Heart right ventricle (tissue), 16 donors: ENCODE measurements at regions of chr12 and their contacts with region 1.

Region 1: DNA sequence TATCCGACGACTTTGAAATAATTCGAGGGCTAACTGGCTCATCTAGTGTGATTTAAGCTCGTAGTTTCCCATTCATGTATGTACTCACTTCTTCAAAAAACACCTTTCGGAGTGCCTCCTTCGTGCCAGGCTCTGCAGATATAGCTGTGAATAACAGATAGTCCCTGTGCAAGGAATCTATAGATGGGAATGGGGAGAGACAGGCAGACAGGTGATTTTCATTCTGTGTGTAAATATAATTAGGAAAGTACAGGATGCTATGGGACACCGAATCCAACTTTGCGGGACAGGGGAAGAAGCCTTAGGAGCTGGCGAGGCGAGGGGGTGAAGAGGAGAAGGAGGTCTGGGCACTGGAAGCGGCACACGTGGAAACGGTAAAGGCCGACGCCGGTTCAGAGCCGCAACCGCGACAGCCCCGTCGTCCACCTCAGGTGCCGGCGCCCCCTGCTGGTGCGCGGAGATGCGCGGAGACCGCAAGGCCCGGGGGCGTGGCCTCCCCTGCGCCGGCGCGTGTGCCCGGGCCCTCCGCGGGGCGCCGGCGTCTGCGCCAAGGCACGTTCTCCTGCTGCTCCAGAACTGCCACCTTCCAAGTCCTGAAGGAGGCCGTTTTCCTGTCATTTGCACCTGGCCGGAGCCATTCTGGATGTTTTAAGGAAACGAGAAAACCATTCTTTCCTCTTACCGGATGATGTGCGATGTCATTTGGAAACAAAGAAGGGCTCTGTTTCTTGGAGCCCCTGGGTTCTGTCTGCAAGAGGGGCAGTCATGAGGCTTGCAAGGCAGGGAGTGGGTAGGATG is 18.0 kb upstream of the CACNA1C start:
- DNase-seq: peak; percentile 86 to 92
- ATAC-seq: peak; percentile 85 to 93 (median 88)
- H3K4me3 ChIP-seq: peak overlapping the region in 9 of 10 donors; percentile 19 to 53 (median 39)
- H3K27ac ChIP-seq: peak overlapping the region in 3 of 10 donors; percentile 27 to 37 (median 32)
- H3K4me1 ChIP-seq: peaks cover 7 to 86% (median 58%) of the 10 kb centered on the region in 9 donors
- H3K27me3 ChIP-seq: peaks cover 0 to 48% (median 0%) of the 10 kb centered on the region in 7 donors
- CTCF ChIP-seq: peak; percentile 87 to 98 (median 95)

Region 2: DNA sequence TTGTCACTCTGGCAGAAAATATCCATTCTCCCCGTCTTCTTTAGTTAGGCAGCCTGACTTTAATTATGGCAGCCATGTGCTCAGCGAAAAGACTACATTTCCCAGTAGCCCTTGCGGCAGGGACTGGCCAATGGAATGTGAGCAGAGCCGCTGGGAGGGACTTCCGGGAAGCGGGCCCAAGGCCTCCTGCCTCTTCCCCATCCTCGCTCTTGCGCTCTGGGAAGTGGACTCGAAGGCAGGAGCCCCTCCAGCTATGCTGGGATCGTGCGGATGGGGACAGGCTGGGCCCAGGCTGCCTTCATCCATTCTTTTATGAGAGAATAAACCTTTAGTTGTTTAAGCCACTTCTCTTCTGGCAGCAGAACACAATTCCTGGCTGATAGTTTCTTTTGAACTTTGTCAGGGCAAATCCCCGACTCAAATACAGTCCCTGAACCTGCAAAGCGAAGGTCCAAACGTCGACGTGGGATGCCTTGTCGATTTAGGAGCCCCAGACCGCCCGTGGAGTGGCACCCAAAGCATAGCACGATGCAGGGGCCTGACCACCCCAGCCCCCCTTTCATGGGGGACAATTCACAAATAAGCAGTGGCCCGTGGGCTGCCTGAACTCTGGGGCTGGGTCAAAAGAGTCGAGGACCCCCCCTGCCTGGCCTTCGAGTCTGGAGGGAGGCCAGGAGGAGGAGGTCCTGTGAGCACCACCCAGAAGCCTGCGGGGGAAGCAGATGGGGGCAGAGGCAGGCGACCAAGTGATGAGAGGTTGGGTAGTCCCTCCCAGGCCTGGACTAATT is 230.1 kb before region 1 on chr12:
- intact Hi-C with region 1: loop called in 7 of 10 experiments (anchors 5 to 10 kb)
- DNase-seq: peak; percentile 86 to 93
- ATAC-seq: peak; percentile 51 to 92 (median 86)
- H3K4me3 ChIP-seq: no peak overlapping the region
- H3K27ac ChIP-seq: peak overlapping the region in 6 of 10 donors; percentile 19 to 77 (median 42)
- H3K4me1 ChIP-seq: peaks cover 3 to 34% (median 14%) of the 10 kb centered on the region in 9 donors
- H3K27me3 ChIP-seq: no peaks in the 10 kb centered on the region
- CTCF ChIP-seq: no peak

Region 3: DNA sequence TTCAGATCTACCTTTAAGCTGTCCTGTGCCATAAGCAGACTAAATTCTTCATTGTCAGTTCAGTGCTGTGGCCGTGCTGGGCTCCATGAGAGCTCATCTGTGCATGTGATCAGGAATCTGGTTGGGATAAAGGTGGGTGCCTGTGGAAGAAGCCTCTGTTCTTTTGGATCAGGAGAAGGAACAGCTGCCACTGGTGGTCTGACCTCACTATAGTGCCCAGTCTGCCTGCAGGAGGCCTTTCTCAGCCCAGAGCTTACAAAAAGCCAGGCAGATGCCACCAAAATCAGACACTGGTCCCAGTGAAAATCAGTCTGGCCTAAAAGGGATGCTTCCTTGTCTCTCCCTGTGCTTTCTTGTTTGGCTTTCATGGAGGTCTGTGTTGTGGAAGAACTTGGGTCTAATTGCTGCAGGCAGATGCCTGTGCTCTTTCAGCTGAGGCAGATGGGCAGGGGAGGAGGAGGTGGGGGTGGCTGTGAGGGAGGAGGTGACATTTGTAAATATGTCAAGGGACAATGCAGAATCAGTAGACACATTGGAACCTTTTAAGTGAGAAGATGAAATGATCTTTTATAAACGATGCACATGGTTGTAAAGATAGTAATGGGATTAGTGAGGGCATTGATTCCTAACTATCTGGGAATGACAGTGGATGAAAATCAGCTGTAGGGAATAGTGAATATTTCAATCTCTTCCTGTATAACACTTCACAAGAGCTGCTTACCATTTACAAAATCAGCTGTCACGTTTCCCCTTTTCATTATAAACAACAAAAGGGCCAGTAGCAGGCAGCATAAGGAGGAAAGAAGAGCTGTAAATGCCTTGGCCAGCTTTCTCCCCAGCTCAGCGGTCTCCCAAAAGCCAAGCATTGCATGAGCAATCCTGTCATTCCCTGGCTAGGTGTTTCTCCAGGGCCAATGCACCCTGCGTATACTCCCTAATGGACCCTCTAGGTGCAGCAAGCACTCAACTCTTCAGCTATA is 161.0 kb before region 1 on chr12:
- intact Hi-C with region 1: no loop called
- DNase-seq: no peak
- ATAC-seq: no peak
- H3K4me3 ChIP-seq: no peak overlapping the region
- H3K27ac ChIP-seq: no peak overlapping the region
- H3K4me1 ChIP-seq: no peaks in the 10 kb centered on the region
- H3K27me3 ChIP-seq: peaks cover 0 to 26% (median 9%) of the 10 kb centered on the region in 7 donors
- CTCF ChIP-seq: no peak

Region 4: DNA sequence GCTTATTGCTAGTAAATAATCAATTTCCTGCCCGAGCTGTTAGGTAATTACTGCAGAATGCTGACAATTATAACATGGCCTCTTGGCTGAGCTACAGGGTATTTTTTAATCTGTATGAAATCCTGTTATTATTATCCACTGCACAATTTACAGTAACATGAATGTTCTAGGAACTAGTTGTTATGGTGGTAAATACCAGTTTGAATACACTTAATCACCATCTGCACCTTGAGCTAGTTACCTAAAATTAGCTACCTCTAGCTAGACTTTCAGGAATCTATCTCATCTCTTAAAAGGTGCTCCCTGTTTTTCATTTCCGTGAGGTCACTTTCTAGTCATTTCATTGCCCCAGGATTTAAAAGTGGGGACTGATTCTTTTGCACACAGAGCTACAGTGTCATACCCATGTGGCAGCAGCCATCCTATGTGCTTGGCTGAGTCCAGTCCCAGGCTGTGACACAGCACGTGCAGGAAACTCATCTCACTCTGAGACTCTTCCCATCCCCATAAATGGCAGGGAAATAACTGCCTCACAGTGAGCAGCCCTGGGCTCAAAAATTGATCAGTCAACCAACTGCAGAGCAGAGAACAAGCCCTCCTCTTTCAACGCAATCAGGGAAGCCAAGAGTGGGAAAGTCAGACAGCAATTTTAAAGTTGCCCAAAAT is 68.1 kb before region 1 on chr12:
- intact Hi-C with region 1: loop called in 4 of 10 experiments (anchors 2 to 10 kb)
- DNase-seq: peak in 1 of 2 donors; percentile 23
- ATAC-seq: peak; percentile 36 to 88 (median 84)
- H3K4me3 ChIP-seq: no peak overlapping the region
- H3K27ac ChIP-seq: peak overlapping the region in 6 of 10 donors; percentile 9 to 54 (median 42)
- H3K4me1 ChIP-seq: peaks cover 0 to 31% (median 6%) of the 10 kb centered on the region in 9 donors
- H3K27me3 ChIP-seq: no peaks in the 10 kb centered on the region
- CTCF ChIP-seq: no peak

Region 5: GRCh38 chr12:1972856-1973317 is 61.9 kb before region 1 on chr12:
- intact Hi-C with region 1: loop called in 5 of 10 experiments (anchors 2 to 10 kb)
- DNase-seq: peak; percentile 24 to 44
- ATAC-seq: peak; percentile 61 to 83 (median 74)
- H3K4me3 ChIP-seq: peak overlapping the region in 9 of 10 donors; percentile 27 to 58 (median 49)
- H3K27ac ChIP-seq: peak overlapping the region; percentile 70 to 94 (median 84)
- H3K4me1 ChIP-seq: peaks cover 0 to 44% (median 15%) of the 10 kb centered on the region in 9 donors
- H3K27me3 ChIP-seq: no peaks in the 10 kb centered on the region
- CTCF ChIP-seq: no peak

Region 6: DNA sequence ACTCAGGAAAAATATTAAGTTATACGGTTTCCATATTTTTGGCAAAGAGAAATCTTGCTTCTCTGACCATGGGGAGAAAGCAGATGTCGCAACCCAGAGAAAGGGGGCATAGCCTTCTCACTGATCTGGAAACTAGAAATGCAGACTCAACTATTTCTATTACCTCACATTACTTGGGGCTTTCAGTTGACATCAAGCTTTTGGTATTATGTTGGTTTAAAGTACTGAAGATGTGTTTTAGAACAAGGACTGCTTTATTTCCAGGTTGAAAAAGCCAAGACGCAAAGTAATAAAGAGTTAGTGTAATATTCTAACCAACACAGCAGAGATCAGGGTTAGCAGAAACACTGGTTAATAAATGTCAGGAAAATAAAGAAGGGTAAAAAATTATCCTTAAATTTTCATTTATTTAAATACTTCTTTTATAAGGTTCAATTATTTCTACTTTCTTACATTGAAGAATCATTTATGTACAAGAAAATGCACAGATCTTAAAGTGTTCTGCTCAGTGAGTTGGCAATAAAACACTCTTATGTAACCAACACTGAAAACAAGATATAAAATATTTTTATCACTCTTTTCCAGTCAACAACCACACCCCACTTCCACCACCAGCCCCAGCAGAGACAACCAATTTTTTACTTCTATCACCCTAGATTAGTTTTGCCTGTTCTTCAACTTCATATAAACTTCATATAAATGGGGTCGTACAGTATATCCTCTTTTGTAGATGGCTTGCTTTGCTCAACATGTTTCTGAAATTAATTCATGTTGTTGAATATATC is 56.6 kb before region 1 on chr12:
- intact Hi-C with region 1: loop called in 6 of 10 experiments (anchors 2 to 10 kb)
- DNase-seq: no peak
- ATAC-seq: peak in 2 of 8 donors; percentile 40 to 56
- H3K4me3 ChIP-seq: no peak overlapping the region
- H3K27ac ChIP-seq: peak overlapping the region in 5 of 10 donors; percentile 45 to 94 (median 86)
- H3K4me1 ChIP-seq: peaks cover 0 to 64% (median 24%) of the 10 kb centered on the region in 9 donors
- H3K27me3 ChIP-seq: no peaks in the 10 kb centered on the region
- CTCF ChIP-seq: no peak

Region 7: DNA sequence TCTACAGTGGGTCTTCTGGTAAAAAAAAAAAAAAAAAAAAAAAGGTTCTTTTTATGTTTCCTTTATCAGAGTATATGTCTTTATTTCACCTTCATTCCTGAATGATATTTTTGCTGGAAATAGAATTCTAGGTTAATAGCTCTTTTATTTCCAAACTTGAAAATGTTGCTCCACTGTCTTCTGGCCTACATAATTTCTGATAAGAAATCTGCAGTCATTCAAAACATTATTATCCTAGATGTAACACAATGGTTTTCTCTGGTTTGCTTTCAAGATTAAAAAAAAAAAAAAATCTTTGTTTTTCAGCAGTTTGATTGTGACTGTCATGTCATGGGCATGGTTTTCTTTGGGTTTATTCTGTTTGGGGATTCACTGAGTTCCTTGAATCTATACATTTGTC is 50.1 kb before region 1 on chr12:
- intact Hi-C with region 1: loop called in 3 of 10 experiments (anchors 5 to 10 kb)
- DNase-seq: no peak
- ATAC-seq: no peak
- H3K4me3 ChIP-seq: no peak overlapping the region
- H3K27ac ChIP-seq: no peak overlapping the region
- H3K4me1 ChIP-seq: peaks cover 0 to 36% (median 9%) of the 10 kb centered on the region in 9 donors
- H3K27me3 ChIP-seq: no peaks in the 10 kb centered on the region
- CTCF ChIP-seq: no peak